Mammary epithelial cell (primary cell): ENCODE measurements at regions of chr5 and their contacts with region 1.

Region 1: DNA sequence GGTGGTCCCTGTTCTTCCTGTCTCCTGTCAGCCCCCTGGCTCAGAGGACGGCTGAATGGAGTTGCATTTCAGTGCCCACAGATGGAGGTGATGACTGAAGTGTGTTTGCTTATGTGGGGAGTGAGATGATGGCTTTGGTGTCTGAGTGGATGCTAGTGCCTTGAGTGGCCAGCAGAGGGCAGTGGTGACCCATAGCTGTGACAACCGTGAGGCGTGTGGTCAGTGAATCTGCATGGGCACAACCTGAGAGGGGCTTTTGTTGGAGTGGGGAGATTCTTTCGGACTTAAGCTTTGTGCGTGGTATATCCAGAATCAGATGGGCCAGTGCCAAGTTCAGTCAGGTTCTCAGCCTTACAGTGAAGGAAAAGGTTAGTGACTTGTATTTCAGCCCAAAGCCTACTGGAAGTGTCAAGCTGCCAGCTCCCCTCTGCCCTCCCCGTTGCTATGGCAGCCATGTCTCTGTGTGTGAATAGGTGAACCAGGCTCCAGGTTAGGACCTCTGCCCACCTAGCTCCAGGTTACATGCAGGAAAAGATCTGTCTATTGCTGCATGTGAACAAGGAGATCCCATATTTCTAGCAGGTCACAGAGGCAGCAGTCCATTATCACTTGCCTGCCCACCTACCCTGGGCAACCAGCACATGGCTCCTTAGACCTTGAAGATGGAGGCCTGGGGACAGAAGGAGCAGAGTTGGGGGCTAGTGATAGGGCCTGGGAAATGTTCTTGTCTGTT is 14.7 kb upstream of the CXXC5 start:
- DNase-seq: peak; percentile 57
- H3K4me3 ChIP-seq: no peak overlapping the region
- H3K27ac ChIP-seq: no peak overlapping the region
- H3K4me1 ChIP-seq: peaks cover 25% of the 10 kb centered on the region
- H3K27me3 ChIP-seq: no peaks in the 10 kb centered on the region
- CTCF ChIP-seq: peak; percentile 98 to 99

Region 2: DNA sequence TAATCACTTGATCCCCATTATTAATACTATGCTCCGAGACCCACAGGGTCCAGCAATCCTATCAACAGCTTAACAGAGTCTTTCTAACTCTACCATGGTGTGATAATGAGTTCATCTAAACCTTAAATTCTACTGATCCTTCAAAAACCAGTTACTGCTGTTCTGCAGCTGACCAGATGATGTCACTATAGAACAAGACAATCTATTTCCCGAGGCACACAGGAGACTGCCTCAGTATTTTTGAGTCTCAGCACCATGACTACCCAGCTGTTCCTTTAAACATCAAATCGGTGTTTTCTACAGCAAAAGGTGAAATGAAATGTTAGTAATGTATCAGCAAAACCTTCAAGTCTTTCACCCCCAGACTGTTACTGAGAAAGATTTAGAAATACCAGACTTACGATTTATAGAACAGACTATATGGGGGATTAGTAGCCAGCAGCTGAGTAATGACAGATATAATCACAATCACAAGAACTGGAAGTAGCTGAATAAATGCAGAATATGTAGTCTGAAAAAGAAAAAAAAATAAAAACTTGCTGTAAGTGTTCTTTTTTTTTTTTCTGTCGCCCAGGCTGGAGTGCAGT is 211.1 kb before region 1 on chr5:
- CTCF ChIA-PET with region 1: no interaction called
- dilution Hi-C with region 1: no loop called
- in situ Hi-C with region 1: no loop called
- intact Hi-C with region 1: loop called (anchors 1 kb)
- DNase-seq: peak; percentile 57
- H3K4me3 ChIP-seq: no peak overlapping the region
- H3K27ac ChIP-seq: no peak overlapping the region
- H3K4me1 ChIP-seq: peaks cover 7% of the 10 kb centered on the region
- H3K27me3 ChIP-seq: no peaks in the 10 kb centered on the region
- CTCF ChIP-seq: peak; percentile 89 to 98

Region 3: DNA sequence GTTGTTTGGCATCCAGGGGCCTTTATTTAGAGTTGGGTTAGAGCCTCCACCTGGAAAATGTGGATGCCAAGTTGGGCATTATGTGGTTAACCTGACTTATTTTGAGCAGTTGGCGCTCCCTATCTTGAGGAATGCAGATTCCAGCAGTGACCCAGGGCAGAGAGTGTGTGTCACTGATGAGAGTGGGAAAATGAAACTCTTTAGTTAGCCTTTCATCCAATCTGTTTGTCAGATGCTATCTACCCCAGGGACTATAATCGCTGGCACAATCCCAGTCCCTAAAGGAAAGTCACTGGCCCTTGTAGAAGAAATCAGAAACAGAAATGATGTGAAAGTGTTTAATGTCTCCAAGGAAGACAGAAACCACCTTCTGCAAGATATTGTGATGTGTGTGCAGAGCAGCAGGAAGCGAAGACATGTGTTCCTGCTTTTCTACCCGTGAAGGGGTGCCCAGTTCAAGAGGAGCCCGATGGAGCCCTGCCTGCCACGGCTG is 140.7 kb before region 1 on chr5:
- CTCF ChIA-PET with region 1: no interaction called
- dilution Hi-C with region 1: no loop called
- in situ Hi-C with region 1: no loop called
- intact Hi-C with region 1: no loop called
- DNase-seq: peak; percentile 52
- H3K4me3 ChIP-seq: no peak overlapping the region
- H3K27ac ChIP-seq: no peak overlapping the region
- H3K4me1 ChIP-seq: peaks cover 19% of the 10 kb centered on the region
- H3K27me3 ChIP-seq: no peaks in the 10 kb centered on the region
- CTCF ChIP-seq: peak in 1 of 2 donors; percentile 4

Region 4: DNA sequence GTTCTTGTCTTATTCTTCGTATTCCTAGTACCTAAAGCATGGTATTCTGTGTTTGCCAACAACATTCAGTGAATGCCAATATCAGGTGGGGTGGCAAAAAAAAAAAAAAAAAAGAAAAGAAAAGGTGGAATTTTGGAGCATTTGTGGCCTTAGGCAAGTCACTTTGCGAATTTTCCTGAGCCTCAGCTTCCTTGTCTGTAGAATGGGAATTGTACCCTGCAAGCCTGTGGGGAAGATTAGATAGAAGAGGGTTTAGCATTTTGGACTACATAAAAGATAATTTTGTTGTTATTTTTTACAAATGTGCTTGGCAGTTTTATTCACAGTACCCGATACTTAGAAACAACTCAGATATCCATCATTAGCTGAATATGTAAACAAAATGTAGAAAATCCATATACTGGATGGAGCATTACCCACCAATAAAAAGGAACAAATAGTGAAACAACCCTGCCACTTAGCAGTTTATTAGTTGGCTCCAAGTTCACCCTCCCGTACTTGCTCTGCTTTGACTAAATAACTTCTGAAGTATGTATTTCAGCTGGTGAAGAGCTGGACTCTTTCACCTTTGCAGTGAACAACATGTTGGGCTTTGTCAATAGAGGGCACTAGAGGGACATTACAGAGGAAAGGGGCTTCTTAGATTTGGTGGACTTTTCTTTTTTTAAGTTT is 58.7 kb before region 1 on chr5:
- CTCF ChIA-PET with region 1: no interaction called
- dilution Hi-C with region 1: no loop called
- in situ Hi-C with region 1: no loop called
- intact Hi-C with region 1: loop called (anchors 5 kb)
- DNase-seq: no peak
- H3K4me3 ChIP-seq: no peak overlapping the region
- H3K27ac ChIP-seq: no peak overlapping the region
- H3K4me1 ChIP-seq: peaks cover 4% of the 10 kb centered on the region
- H3K27me3 ChIP-seq: no peaks in the 10 kb centered on the region
- CTCF ChIP-seq: peak; percentile 72 to 76

Region 5: DNA sequence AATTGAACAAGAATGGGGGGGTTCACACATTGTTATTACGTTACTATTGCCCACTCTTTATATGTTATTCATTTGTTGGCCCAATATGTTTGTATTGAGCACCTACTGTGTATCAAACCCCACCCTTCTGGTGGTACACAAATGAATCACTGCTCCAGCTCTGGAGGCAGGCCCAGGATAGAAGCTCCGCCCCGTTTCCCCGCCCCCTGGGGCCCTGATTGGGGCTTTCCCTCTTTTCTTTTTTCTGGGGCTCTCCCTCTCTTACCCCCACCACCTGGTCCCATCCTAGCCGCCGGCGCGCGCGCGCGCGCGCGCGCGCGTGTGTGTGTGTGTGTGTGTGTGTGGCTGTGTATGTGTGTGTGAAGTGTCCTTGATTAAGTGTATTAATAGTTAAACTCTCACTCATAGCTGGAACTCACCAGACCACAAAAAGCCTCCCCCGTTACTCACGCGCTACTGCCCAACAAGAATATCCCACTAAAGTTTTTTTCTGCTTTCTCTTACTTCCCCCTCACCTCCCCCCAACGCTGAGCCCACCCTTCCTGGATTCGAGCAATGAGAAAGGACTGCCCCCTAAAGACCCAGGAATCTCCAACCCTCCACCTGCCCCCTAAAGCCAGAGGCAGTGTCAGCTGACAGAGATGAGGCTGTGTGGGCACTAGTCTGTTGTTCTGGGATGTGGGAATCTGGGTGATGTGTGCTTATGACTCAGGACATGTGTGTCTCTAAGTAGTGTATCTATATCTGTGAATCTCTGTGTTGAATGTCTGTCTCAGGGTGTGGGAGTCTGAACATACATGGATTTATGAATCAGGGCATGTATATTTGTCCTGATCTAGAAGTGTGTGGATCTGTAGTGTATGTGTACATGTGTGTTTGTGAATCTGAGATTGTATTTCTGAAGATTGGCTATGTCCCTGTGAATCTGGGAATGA is 18.7 kb after region 1 on chr5:
- CTCF ChIA-PET with region 1: interaction called, 10 read pairs
- dilution Hi-C with region 1: no loop called
- in situ Hi-C with region 1: no loop called
- intact Hi-C with region 1: loop called (anchors 1 kb)
- DNase-seq: peak; percentile 92
- H3K4me3 ChIP-seq: peak overlapping the region; percentile 6 to 23 (median 21)
- H3K27ac ChIP-seq: peak overlapping the region; percentile 74
- H3K4me1 ChIP-seq: peaks cover 56% of the 10 kb centered on the region
- H3K27me3 ChIP-seq: no peaks in the 10 kb centered on the region
- CTCF ChIP-seq: no peak

Region 6: GRCh38 chr5:139690064-139690802 is 56.8 kb after region 1 on chr5:
- CTCF ChIA-PET with region 1: no interaction called
- dilution Hi-C with region 1: loop called (anchors 5 kb)
- in situ Hi-C with region 1: loop called (anchors 10 kb)
- intact Hi-C with region 1: loop called (anchors 1 kb)
- DNase-seq: peak; percentile 28
- H3K4me3 ChIP-seq: no peak overlapping the region
- H3K27ac ChIP-seq: no peak overlapping the region
- H3K4me1 ChIP-seq: peaks cover under 1% of the 10 kb centered on the region
- H3K27me3 ChIP-seq: no peaks in the 10 kb centered on the region
- CTCF ChIP-seq: peak; percentile 59 to 64

Region 7: GRCh38 chr5:139755892-139756671 is 122.6 kb after region 1 on chr5:
- CTCF ChIA-PET with region 1: no interaction called
- dilution Hi-C with region 1: loop called (anchors 5 kb)
- in situ Hi-C with region 1: loop called (anchors 5 kb)
- intact Hi-C with region 1: no loop called
- DNase-seq: no peak
- H3K4me3 ChIP-seq: peak overlapping the region in 2 of 3 experiments; percentile 7 to 21
- H3K27ac ChIP-seq: no peak overlapping the region
- H3K4me1 ChIP-seq: no peaks in the 10 kb centered on the region
- H3K27me3 ChIP-seq: no peaks in the 10 kb centered on the region
- CTCF ChIP-seq: no peak

Region 8: DNA sequence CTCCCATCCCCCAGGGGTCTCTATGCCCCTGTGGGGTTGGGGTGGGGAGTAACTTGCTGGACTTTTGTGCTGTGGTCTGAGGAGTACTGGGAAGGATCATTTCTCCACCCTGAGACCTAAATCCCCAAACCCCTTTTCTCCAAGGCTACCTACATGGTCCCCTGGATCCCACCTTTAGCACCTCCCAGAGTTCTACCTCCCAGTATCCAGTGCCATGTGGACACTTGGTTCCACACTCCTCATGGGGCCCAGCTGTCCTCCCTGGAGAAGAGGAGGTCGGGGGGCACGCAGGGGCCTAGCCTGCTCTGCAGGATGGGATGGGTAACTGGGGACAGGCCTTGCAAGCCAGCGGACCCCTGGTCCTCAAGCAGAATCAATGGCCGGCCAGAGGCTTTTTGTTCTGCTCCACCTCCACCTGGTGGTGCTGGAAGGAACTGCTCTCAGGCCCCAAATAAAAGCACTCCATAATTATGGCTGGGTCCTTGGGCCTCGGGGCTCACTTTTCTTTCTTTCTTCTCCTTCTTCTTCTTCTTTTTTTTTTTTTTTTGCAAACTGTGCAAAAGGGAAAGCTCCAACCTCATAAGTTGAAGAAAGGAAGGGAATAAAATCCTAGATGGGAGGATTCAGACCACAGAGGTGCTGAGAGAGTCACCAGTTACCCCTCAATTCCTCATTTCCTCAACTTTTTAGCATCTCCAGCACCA is 230.5 kb after region 1 on chr5:
- CTCF ChIA-PET with region 1: no interaction called
- dilution Hi-C with region 1: no loop called
- in situ Hi-C with region 1: no loop called
- intact Hi-C with region 1: loop called (anchors 5 kb)
- DNase-seq: peak; percentile 12
- H3K4me3 ChIP-seq: no peak overlapping the region
- H3K27ac ChIP-seq: no peak overlapping the region
- H3K4me1 ChIP-seq: peaks cover 10% of the 10 kb centered on the region
- H3K27me3 ChIP-seq: no peaks in the 10 kb centered on the region
- CTCF ChIP-seq: peak; percentile 82 to 92

Region 9: DNA sequence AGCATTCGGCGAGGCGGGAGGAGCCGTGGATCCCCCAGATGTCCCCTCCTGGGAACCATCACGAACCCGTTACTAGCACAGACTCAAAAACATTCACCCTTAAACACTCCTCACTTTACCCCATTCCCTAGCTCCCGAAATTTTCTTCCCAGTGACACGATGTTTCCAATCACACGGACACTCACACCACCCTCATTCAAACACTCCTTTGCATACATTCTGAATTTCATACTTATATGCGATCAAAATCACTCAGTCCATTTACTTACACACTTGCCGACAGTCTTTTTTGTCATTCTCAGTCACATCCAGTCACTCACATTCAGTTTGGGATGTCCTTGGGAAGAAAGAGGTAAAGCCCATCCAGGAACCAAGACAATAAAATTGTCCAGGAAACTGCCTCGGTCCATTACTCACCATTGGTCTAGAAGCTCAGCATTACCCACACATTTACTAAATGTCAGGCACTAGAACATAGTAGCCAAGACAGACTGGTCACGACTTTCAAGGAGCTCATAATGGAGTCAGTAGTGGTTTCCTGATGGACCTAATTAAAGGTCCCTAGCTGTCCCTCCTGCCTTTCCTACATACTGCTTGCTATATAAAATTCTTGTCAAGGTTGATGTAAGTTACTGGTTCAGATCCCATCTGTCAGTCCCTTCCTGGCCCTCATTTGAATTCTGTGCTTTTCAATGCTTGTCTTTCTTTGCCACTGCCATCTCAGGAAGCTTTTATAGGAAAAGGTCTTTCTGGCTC is 931.7 kb after region 1 on chr5:
- CTCF ChIA-PET with region 1: no interaction called
- dilution Hi-C with region 1: no loop called
- in situ Hi-C with region 1: no loop called
- intact Hi-C with region 1: no loop called
- DNase-seq: no peak
- H3K4me3 ChIP-seq: peak overlapping the region; percentile 88 to 92 (median 90)
- H3K27ac ChIP-seq: peak overlapping the region; percentile 82
- H3K4me1 ChIP-seq: peaks cover 18% of the 10 kb centered on the region
- H3K27me3 ChIP-seq: no peaks in the 10 kb centered on the region
- CTCF ChIP-seq: no peak